H1 (cell line): ENCODE measurements at regions of chr9 and their contacts with region 1.

Region 1: GRCh38 chr9:2620919-2621679 is 488 bp upstream of the VLDLR start:
- DNase-seq: peak in 1 of 2 experiments; percentile 86
- H3K4me3 ChIP-seq: peak overlapping the region; percentile 44 to 71 (median 69)
- H3K27ac ChIP-seq: peak overlapping the region; percentile 30; the same call in 1 of the 2 replicates
- H3K4me1 ChIP-seq: peaks cover 3 to 19% (median 12%) of the 10 kb centered on the region in 4 experiments
- H3K27me3 ChIP-seq: peaks cover 0 to 7% (median 3%) of the 10 kb centered on the region in 4 experiments; a peak in 4 of 7 replicates
- CTCF ChIP-seq: peak in 1 of 3 experiments; percentile 8; a peak in 1 of 4 replicates
- EP300 ChIP-seq: 0 out of 3 replicates have a peak, but pooled peaks of 1 of the 2 experiments have one; percentile 7
- POLR2A ChIP-seq: peak in 1 of 2 experiments; percentile 81; a peak in 2 of 3 replicates
- RAD21 ChIP-seq: peak in 1 of 2 experiments; percentile 28; a peak in 1 of 4 replicates

Region 2: GRCh38 chr9:2602704-2603116 is 18.4 kb before region 1 on chr9:
- CTCF ChIA-PET with region 1: interaction called, 5 read pairs
- POLR2A ChIA-PET with region 1: interaction called, 10 read pairs
- DNase-seq: no peak
- H3K4me3 ChIP-seq: no peak overlapping the region
- H3K27ac ChIP-seq: no peak overlapping the region
- H3K4me1 ChIP-seq: no peaks in the 10 kb centered on the region
- H3K27me3 ChIP-seq: no peaks in the 10 kb centered on the region
- CTCF ChIP-seq: no peak
- EP300 ChIP-seq: no peak
- POLR2A ChIP-seq: no peak
- RAD21 ChIP-seq: no peak